Activated CD4-positive, alpha-beta memory T cell treated with anti-CD3 and anti-CD28 coated beads for 36 hours (primary cell): ENCODE measurements at regions of chr15 and their contacts with region 1.

Region 1: DNA sequence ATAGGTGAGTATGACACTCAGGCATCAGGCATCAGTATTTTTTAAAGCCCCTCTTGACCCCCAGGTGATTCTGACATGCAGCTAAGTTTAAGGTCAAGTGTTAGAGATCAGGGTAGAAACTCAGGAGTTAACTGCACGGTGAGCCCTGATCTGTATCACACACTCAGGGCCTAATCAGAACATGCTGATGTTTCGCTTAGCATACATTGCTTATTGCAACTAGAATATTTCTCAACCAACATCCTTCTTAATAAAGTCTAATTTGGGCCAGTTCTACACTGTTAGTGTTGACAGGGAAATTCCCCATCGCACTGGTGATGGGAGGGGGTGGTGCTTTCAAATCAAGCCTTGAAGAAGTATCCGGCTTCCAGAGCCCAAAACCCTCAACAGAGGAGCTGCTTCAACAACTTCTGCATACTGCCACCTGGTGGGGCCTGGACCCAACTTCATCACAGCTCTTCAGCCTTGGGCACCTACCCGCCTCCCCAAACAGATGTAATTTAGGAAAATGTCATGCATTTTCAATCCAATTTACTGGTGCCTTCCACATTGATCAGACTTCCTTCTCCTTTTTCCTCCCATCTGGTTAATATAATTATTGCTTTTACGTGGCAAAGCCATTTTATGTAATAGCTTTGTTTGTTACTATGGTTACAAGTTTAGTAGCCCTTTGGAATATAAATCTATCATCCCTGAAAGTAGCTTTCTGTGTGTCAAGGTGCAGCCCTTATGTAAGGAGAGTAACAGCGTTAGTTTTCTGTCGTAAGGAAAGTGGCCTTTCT is 312.2 kb downstream of the RORA start:
- DNase-seq: peak; percentile 93
- H3K4me3 Mint-ChIP-seq: no peak overlapping the region
- H3K27ac Mint-ChIP-seq: peak overlapping the region; percentile 5
- H3K4me1 Mint-ChIP-seq: peaks cover 25% of the 10 kb centered on the region
- H3K27me3 Mint-ChIP-seq: peaks cover 3% of the 10 kb centered on the region

Region 2: GRCh38 chr15:60507596-60508424 is 409.1 kb before region 1 on chr15:
- CTCF ChIA-PET with region 1: interaction called, 24 read pairs
- POLR2A ChIA-PET with region 1: no interaction called
- intact Hi-C with region 1: loop called (anchors 2 kb)
- DNase-seq: peak; percentile 56
- H3K4me3 Mint-ChIP-seq: no peak overlapping the region
- H3K27ac Mint-ChIP-seq: peak overlapping the region; percentile 69
- H3K4me1 Mint-ChIP-seq: peaks cover 56% of the 10 kb centered on the region
- H3K27me3 Mint-ChIP-seq: no peaks in the 10 kb centered on the region

Region 3: GRCh38 chr15:60649845-60650548 is 266.9 kb before region 1 on chr15:
- CTCF ChIA-PET with region 1: interaction called, 6 read pairs
- POLR2A ChIA-PET with region 1: interaction called, 5 read pairs
- intact Hi-C with region 1: loop called (anchors 1 kb)
- DNase-seq: peak; percentile 68
- H3K4me3 Mint-ChIP-seq: peak overlapping the region; percentile 54
- H3K27ac Mint-ChIP-seq: peak overlapping the region; percentile 87
- H3K4me1 Mint-ChIP-seq: peaks cover 58% of the 10 kb centered on the region
- H3K27me3 Mint-ChIP-seq: no peaks in the 10 kb centered on the region

Region 4: DNA sequence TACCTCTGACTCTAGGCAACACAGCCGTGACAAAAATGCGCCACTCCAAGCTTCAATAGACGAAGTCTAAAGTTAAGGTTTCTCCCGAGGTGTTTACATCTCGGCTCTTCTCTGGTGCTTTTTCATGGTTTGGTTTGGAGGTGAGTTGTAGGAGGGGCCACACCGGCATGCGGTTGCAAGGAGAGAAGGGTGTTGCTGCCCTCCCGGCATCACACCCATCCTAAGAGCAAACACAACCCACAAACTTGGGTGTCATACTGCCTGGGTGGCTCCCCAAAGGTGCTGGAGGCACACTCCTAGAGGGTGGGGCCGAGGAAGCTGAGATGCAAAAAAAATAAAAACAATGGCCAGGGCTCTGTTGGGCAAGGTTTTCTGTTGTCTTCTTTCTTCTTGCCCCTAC is 212.7 kb before region 1 on chr15:
- CTCF ChIA-PET with region 1: interaction called, 12 read pairs
- POLR2A ChIA-PET with region 1: no interaction called
- intact Hi-C with region 1: loop called (anchors 5 kb)
- DNase-seq: peak; percentile 66
- H3K4me3 Mint-ChIP-seq: peak overlapping the region; percentile 45
- H3K27ac Mint-ChIP-seq: peak overlapping the region; percentile 57
- H3K4me1 Mint-ChIP-seq: peaks cover 77% of the 10 kb centered on the region
- H3K27me3 Mint-ChIP-seq: no peaks in the 10 kb centered on the region

Region 5: GRCh38 chr15:60840306-60840702 is 76.6 kb before region 1 on chr15:
- CTCF ChIA-PET with region 1: interaction called, 14 read pairs
- POLR2A ChIA-PET with region 1: no interaction called
- intact Hi-C with region 1: no loop called
- DNase-seq: peak; percentile 36
- H3K4me3 Mint-ChIP-seq: peak overlapping the region; percentile 68
- H3K27ac Mint-ChIP-seq: peak overlapping the region; percentile 74
- H3K4me1 Mint-ChIP-seq: peaks cover 74% of the 10 kb centered on the region
- H3K27me3 Mint-ChIP-seq: peaks cover 3% of the 10 kb centered on the region

Region 6: GRCh38 chr15:60905587-60905986 is 11.3 kb before region 1 on chr15:
- CTCF ChIA-PET with region 1: interaction called, 24 read pairs
- POLR2A ChIA-PET with region 1: no interaction called
- intact Hi-C with region 1: no loop called
- DNase-seq: peak; percentile 40
- H3K4me3 Mint-ChIP-seq: no peak overlapping the region
- H3K27ac Mint-ChIP-seq: no peak overlapping the region
- H3K4me1 Mint-ChIP-seq: peaks cover 38% of the 10 kb centered on the region
- H3K27me3 Mint-ChIP-seq: peaks cover 6% of the 10 kb centered on the region

Region 7: GRCh38 chr15:61069394-61070075 is 152.7 kb after region 1 on chr15:
- CTCF ChIA-PET with region 1: no interaction called
- POLR2A ChIA-PET with region 1: no interaction called
- intact Hi-C with region 1: no loop called
- DNase-seq: no peak
- H3K4me3 Mint-ChIP-seq: no peak overlapping the region
- H3K27ac Mint-ChIP-seq: no peak overlapping the region
- H3K4me1 Mint-ChIP-seq: no peaks in the 10 kb centered on the region
- H3K27me3 Mint-ChIP-seq: peaks cover 20% of the 10 kb centered on the region